OCI-LY7 (cell line): ENCODE measurements at regions of chr3 and their contacts with region 1.

Region 1: DNA sequence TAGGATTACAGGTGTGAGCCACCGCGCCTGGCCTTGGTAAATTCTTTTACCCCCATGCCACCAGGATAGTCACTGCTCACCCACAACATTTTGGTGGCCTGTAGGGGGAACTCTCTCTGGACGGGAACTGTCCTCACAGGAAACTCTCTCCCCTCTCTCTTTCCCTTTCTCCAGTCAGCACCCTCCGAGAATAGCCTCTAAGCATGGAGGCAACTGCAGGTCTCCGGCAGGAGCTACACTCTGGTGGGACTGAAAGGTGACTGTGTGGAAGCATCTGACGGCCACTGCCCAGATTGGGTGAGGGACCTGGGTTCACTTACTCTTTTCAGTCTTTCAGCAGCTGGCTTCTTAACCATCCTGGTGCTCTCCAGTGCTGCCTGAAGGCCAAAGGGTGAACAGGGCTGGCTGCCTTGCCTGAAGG is 21.3 kb downstream of the TRANK1 start:
- DNase-seq: peak; percentile 60
- H3K4me3 ChIP-seq: peak overlapping the region; percentile 76
- H3K27ac ChIP-seq: peak overlapping the region; percentile 87
- H3K4me1 ChIP-seq: peaks cover 61% of the 10 kb centered on the region
- CTCF ChIP-seq: peak; percentile 70

Region 2: DNA sequence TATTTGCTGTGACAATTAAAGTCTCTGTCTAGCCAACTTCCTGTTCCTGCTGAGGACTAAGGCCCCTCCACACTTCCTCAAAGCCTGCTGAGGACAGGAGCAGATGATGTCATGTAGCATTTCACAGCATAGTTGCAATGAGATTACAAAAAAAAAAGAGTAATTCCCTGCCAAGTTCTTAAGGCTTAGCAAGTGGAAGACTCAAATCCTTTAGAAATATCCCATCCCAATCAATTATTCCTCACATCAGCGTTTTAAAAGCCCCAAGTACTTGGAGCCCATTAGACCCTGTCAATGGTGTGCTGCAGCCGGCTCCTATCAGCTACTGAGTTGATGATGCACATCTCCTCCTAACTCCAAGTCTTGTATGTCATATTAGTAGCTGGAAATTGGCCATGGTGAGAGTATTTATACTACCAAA is 30.4 kb before region 1 on chr3:
- CTCF ChIA-PET with region 1: no interaction called
- POLR2A ChIA-PET with region 1: interaction called, 14 read pairs
- intact Hi-C with region 1: no loop called
- DNase-seq: peak; percentile 79
- H3K4me3 ChIP-seq: peak overlapping the region; percentile 34
- H3K27ac ChIP-seq: peak overlapping the region; percentile 82
- H3K4me1 ChIP-seq: peaks cover 67% of the 10 kb centered on the region
- CTCF ChIP-seq: no peak

Region 3: GRCh38 chr3:36944012-36944640 is 20.6 kb after region 1 on chr3:
- CTCF ChIA-PET with region 1: no interaction called
- POLR2A ChIA-PET with region 1: interaction called, 12 read pairs
- intact Hi-C with region 1: loop called (anchors 1 kb)
- DNase-seq: peak; percentile 62
- H3K4me3 ChIP-seq: peak overlapping the region; percentile 70
- H3K27ac ChIP-seq: peak overlapping the region; percentile 10
- H3K4me1 ChIP-seq: peaks cover 11% of the 10 kb centered on the region
- CTCF ChIP-seq: no peak

Region 4: GRCh38 chr3:37144806-37145205 is 221.3 kb after region 1 on chr3:
- CTCF ChIA-PET with region 1: no interaction called
- POLR2A ChIA-PET with region 1: no interaction called
- intact Hi-C with region 1: no loop called
- DNase-seq: no peak
- H3K4me3 ChIP-seq: no peak overlapping the region
- H3K27ac ChIP-seq: no peak overlapping the region
- H3K4me1 ChIP-seq: no peaks in the 10 kb centered on the region
- CTCF ChIP-seq: no peak

Region 5: GRCh38 chr3:37741644-37742043 is 818.1 kb after region 1 on chr3:
- CTCF ChIA-PET with region 1: no interaction called
- POLR2A ChIA-PET with region 1: no interaction called
- intact Hi-C with region 1: no loop called
- DNase-seq: peak; percentile 7
- H3K4me3 ChIP-seq: no peak overlapping the region
- H3K27ac ChIP-seq: no peak overlapping the region
- H3K4me1 ChIP-seq: peaks cover 7% of the 10 kb centered on the region
- CTCF ChIP-seq: peak; percentile 34